Mammary epithelial cell (primary cell): ENCODE measurements at regions of chr9 and their contacts with region 1.

Region 1: DNA sequence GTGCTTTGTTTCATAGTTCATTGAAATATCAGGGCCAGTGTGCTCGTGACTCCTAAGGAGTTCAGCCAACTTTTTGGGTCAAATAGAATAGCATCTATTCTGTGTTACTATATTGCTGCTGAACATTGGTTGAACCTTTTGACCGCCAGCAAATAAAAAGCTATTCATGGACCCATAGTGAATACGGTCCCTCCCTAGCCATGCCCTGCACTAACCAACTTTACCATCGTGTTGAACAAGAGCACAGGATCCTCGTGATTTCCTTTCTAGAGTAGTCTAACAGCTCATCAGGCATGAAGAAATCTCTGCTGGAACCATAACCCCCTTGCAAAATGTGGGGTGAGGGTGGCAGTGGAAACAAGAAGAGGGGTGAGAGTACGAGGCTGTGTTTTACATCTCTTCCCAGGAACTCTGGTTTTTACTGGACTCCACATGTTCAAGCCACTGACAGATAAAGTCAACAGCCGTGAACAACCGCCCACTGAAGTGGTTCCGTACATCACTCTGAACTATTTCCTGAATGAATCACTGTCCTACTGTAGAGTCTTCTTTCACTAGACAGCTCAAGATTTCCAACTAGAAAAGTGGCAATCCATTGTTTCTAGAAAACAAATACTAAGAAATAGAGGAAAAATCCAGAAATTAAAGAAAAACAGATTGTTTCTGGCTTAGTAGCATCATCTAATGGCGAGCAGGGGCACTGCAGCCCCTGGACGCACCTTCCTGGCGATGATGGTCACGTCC is 70.1 kb upstream of the SPATA31E1 start:
- DNase-seq: peak; percentile 62
- H3K4me3 ChIP-seq: no peak overlapping the region
- H3K27ac ChIP-seq: no peak overlapping the region
- H3K4me1 ChIP-seq: peaks cover 10% of the 10 kb centered on the region
- H3K27me3 ChIP-seq: no peaks in the 10 kb centered on the region
- CTCF ChIP-seq: peak; percentile 98 to 100

Region 2: DNA sequence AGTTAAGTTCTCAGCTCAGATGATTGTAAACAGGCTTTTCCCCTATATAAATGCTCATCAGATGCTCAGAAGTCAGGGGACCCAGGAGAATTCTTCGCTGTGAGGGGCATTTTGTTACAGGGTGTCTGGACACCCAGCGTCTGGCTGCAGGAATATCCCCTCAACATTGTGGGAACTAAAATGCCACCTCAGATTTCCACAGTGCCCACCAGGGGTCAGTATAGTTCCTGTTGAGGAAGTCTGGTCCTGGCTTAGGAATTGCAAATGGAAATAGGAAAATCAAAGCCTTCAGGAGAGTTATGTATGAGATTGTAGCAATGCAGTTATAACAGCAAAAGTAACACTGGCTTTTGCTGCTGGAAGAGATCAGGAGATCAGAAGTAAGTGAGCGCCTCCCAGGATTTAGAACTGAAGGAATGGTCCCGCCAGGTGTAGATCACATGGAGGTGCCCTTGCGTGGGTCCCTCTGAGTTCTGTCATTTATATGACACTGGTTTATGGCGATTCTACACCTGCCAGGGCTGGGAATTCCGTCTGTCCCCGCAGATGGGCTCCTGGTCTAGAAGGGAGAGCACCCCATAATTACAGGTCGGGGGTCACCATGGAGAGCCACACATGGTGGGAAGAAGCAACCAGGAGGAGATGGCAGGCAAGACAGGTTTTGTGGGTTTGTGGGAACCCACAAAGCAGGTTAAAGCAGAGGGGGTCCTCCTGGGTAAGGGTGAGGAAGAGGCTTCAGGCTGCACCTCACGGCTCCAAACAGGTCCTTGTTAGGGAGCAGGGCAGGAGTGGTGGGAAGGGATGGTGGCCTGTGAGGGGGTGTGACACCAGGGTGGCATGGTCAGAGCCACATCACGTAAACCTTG is 133.7 kb before region 1 on chr9:
- CTCF ChIA-PET with region 1: interaction called, 7 read pairs
- dilution Hi-C with region 1: no loop called
- in situ Hi-C with region 1: loop called in 1 of 2 experiments (anchors 5 kb)
- intact Hi-C with region 1: loop called (anchors 1 kb)
- DNase-seq: peak; percentile 36
- H3K4me3 ChIP-seq: no peak overlapping the region
- H3K27ac ChIP-seq: no peak overlapping the region
- H3K4me1 ChIP-seq: no peaks in the 10 kb centered on the region
- H3K27me3 ChIP-seq: no peaks in the 10 kb centered on the region
- CTCF ChIP-seq: peak; percentile 76 to 85

Region 3: GRCh38 chr9:87725900-87726709 is 86.4 kb before region 1 on chr9 and contains the start of gene CTSL:
- CTCF ChIA-PET with region 1: interaction called, 3 read pairs
- dilution Hi-C with region 1: no loop called
- in situ Hi-C with region 1: no loop called
- intact Hi-C with region 1: loop called (anchors 1 kb)
- DNase-seq: peak; percentile 70
- H3K4me3 ChIP-seq: peak within 1 kb of the TSS; percentile 48 to 78 (median 70)
- H3K27ac ChIP-seq: peak within 1 kb of the TSS; percentile 58
- H3K4me1 ChIP-seq: no peaks in the 10 kb centered on the region
- H3K27me3 ChIP-seq: no peaks in the 10 kb centered on the region
- CTCF ChIP-seq: peak in 1 of 2 donors; percentile 49
- total RNA-seq, gene CTSL: 38.8 to 109 TPM

Region 4: GRCh38 chr9:87763286-87763685 is 49.3 kb before region 1 on chr9:
- CTCF ChIA-PET with region 1: no interaction called
- dilution Hi-C with region 1: no loop called
- in situ Hi-C with region 1: no loop called
- intact Hi-C with region 1: no loop called
- DNase-seq: peak; percentile 90
- H3K4me3 ChIP-seq: no peak overlapping the region
- H3K27ac ChIP-seq: peak overlapping the region; percentile 70
- H3K4me1 ChIP-seq: peaks cover 40% of the 10 kb centered on the region
- H3K27me3 ChIP-seq: no peaks in the 10 kb centered on the region
- CTCF ChIP-seq: no peak